PC-3 (cell line): ENCODE measurements at regions of chr7 and their contacts with region 1.

Region 1: DNA sequence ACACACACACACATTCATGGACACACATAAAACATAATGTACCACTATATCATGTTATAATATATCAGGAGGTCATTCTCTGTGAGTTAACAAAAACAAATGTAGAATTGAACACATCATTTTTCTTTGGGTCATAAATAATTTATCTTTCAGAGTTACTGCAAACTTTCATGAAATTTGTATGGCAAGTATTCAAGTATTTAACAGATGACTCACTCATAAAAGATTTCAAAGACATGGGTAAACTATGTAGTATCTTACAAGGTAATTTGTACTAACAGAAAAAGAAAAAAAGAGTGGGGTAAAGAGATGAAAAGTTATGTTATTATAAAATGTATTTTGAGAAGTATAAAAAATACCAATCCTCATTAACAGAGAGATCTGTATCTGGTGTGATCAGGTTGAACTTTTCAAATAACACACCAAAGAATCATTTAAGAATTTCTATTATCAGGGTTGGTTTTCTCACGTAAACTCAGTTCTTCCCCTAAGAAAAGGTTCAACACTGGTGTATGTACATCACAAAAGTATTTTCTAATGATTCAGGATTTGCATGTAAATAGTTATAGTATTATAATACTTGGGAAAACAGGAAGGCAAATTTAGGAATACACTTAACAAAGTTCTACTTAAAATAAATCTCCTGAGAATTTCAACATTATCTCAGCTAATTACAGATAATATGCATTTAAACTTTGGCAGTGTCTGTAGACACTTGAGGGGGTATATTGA is 933.1 kb upstream of the LRRN3 start:
- DNase-seq: peak; percentile 55
- ATAC-seq: peak; percentile 79
- H3K4me3 ChIP-seq: no peak overlapping the region
- H3K27ac ChIP-seq: no peak overlapping the region
- H3K4me1 ChIP-seq: 0 out of 2 replicates have a peak, but pooled peaks cover 5% of the 10 kb centered on the region
- H3K27me3 ChIP-seq: no peaks in the 10 kb centered on the region
- CTCF ChIP-seq: no peak

Region 2: GRCh38 chr7:110179037-110179436 is 21.2 kb after region 1 on chr7:
- CTCF ChIA-PET with region 1: no interaction called
- POLR2A ChIA-PET with region 1: no interaction called
- intact Hi-C with region 1: loop called (anchors 1 kb)
- DNase-seq: peak; percentile 35
- ATAC-seq: peak; percentile 93
- H3K4me3 ChIP-seq: peak overlapping the region; percentile 12; the same call in 1 of the 2 replicates
- H3K27ac ChIP-seq: peak overlapping the region; percentile 48
- H3K4me1 ChIP-seq: 0 out of 2 replicates have a peak, but pooled peaks cover 3% of the 10 kb centered on the region
- H3K27me3 ChIP-seq: no peaks in the 10 kb centered on the region
- CTCF ChIP-seq: no peak

Region 3: DNA sequence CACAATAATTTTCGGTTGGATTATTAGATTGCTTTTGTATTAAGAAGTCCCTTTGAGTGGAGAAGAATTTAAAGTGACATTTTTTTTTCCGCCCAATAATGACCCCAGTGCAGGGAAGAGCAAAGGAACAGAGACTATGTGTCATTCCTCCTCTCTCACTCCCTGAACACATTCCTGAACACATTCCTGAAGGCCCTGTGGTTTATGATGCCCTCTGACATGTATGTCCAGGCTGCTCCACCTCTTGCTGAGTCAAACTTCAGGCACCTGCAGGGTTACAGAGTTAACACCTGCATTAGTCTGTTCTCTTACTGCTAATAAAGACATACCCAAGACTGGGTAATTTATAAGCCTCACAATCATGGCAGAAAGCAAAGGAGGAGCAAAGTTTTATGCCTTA is 229.1 kb after region 1 on chr7:
- CTCF ChIA-PET with region 1: no interaction called
- POLR2A ChIA-PET with region 1: no interaction called
- intact Hi-C with region 1: no loop called
- DNase-seq: peak; percentile 85
- ATAC-seq: peak; percentile 100
- H3K4me3 ChIP-seq: no peak overlapping the region
- H3K27ac ChIP-seq: no peak overlapping the region
- H3K4me1 ChIP-seq: peaks cover 21% of the 10 kb centered on the region
- H3K27me3 ChIP-seq: no peaks in the 10 kb centered on the region
- CTCF ChIP-seq: no peak